H1 (cell line): ENCODE measurements at regions of chr11 and their contacts with region 1.

Region 1: GRCh38 chr11:11078344-11079086 is 220.7 kb upstream of the ZBED5 start:
- DNase-seq: no peak
- H3K4me3 ChIP-seq: no peak overlapping the region
- H3K27ac ChIP-seq: no peak overlapping the region
- H3K4me1 ChIP-seq: peaks cover 0 to 11% (median 8%) of the 10 kb centered on the region in 4 experiments; a peak in 6 of 7 replicates
- H3K27me3 ChIP-seq: no peaks in the 10 kb centered on the region; a peak in 1 of 7 replicates
- CTCF ChIP-seq: peak in 2 of 3 experiments; percentile 12 to 21; a peak in 1 of 4 replicates
- EP300 ChIP-seq: no peak
- POLR2A ChIP-seq: no peak
- RAD21 ChIP-seq: peak; percentile 45 to 51

Region 2: DNA sequence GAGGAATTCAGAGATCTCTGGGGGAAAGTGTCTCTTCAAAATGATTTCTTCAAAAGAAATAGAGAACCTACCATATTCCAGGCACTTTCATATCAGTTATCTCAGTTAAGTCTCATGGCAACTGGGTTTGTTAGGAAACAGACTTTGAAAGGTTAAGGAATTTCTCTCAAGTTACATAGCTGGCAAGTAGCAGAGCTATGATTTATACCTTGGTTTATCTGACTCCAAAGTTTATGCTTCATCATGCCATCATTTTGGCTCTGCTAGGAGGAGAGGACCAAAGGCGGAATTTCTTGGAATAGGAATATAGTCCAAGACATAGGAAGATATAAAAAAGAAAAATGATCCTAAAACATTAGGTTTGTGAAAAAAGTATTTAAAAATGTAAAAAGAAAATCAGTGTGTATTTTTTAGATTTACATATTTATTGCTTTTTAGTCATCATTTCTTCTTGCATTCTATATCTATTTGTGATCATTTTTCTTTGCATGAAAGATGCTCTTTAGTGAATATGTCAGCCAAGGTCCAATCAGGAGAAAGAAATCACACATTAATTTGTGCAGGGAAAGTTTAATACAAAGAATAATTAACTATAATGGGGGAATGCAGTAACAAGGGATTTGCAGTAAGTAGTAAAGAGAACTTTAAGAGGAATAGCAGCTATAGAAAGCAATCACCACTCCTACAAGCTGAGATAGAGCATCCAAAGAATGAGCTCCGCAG is 21.6 kb before region 1 on chr11:
- CTCF ChIA-PET with region 1: interaction called, 10 read pairs
- POLR2A ChIA-PET with region 1: interaction called, 3 read pairs
- DNase-seq: no peak
- H3K4me3 ChIP-seq: no peak overlapping the region
- H3K27ac ChIP-seq: no peak overlapping the region
- H3K4me1 ChIP-seq: no peaks in the 10 kb centered on the region
- H3K27me3 ChIP-seq: no peaks in the 10 kb centered on the region
- CTCF ChIP-seq: no peak
- EP300 ChIP-seq: no peak
- POLR2A ChIP-seq: no peak
- RAD21 ChIP-seq: no peak

Region 3: DNA sequence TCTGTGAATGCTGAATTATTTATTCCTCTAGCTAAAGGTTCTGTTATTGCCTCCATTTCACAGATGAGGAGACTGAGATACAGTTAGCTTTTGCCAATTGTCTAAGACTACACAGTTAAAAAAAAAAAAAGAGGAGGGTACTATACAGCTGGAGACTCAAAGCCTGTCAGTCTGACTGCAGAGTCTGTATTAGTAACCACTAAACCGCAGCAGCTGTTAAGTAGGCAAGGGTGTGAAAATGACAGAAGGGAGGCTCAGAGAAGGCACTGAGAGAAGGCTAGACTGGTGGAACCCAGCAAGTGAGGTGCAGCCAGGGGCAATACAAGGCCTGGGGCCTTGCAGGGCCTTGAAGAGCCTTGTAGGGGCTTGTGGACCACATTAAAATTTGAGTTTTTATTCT is 93.3 kb after region 1 on chr11:
- CTCF ChIA-PET with region 1: no interaction called
- POLR2A ChIA-PET with region 1: no interaction called
- DNase-seq: no peak
- H3K4me3 ChIP-seq: no peak overlapping the region
- H3K27ac ChIP-seq: no peak overlapping the region
- H3K4me1 ChIP-seq: no peaks in the 10 kb centered on the region
- H3K27me3 ChIP-seq: peaks cover 0 to 3% (median 0%) of the 10 kb centered on the region in 4 experiments; a peak in 2 of 7 replicates
- CTCF ChIP-seq: no peak
- EP300 ChIP-seq: no peak
- POLR2A ChIP-seq: no peak
- RAD21 ChIP-seq: no peak

Region 4: GRCh38 chr11:11211186-11211585 is 132.7 kb after region 1 on chr11:
- CTCF ChIA-PET with region 1: no interaction called
- POLR2A ChIA-PET with region 1: no interaction called
- DNase-seq: no peak
- H3K4me3 ChIP-seq: no peak overlapping the region
- H3K27ac ChIP-seq: no peak overlapping the region
- H3K4me1 ChIP-seq: no peaks in the 10 kb centered on the region
- H3K27me3 ChIP-seq: no peaks in the 10 kb centered on the region
- CTCF ChIP-seq: no peak
- EP300 ChIP-seq: no peak
- POLR2A ChIP-seq: no peak
- RAD21 ChIP-seq: no peak